ENCODE measurements at regions of chr9 and their contacts with region 1.

Region 1: DNA sequence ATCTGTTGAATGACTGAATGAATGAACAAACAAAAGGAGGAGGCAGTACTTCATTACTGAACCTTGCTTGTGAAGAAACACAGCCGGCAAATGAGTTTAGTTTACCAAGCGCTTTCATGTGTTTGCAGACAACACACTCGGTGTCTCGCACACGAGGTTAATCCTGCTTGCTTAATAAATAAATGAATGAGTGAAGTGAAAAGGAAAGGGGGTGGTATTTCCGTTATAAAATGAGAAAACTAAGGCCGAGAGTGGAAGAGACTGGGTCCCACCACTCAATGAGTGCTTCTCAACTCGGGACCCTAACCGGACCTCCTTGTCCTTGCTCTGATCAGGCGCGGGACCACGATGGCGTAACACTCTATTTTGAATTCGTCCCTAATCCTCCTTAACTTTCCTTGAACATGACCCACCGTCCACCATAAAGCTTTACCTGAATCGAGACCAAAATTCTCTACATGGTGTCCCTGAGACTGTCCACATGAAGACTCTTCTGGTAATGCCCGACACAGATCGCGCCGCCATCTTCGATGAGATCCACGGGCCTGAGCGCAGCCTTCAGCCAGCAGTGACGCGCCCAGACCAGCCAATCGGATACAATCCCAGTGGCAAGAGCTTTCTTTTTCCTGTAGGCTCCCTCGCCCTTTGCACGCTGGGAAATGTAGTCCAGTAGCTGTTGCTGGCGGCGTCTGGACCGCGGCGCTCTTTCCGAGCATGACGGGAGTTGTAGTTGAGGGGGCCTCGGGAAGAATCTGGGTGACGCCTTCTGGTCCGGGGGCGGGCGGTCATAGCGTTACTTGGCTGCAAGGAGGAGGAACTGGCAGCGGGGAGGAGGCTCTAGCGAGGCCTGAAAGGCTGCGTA is at the starts of genes MRPL50 and ZNF189:
- DNase-seq: peak; percentile 98
- H3K4me3 Mint-ChIP-seq: peak within 1 kb of the TSS; percentile 100
- H3K27ac Mint-ChIP-seq: peak within 1 kb of the TSS; percentile 98
- H3K4me1 Mint-ChIP-seq: peaks cover 68% of the 10 kb centered on the region
- H3K27me3 Mint-ChIP-seq: no peaks in the 10 kb centered on the region
- total RNA-seq, gene MRPL50: 13.3 to 13.4 TPM
- total RNA-seq, gene ZNF189: 10.2 to 10.6 TPM

Region 2: DNA sequence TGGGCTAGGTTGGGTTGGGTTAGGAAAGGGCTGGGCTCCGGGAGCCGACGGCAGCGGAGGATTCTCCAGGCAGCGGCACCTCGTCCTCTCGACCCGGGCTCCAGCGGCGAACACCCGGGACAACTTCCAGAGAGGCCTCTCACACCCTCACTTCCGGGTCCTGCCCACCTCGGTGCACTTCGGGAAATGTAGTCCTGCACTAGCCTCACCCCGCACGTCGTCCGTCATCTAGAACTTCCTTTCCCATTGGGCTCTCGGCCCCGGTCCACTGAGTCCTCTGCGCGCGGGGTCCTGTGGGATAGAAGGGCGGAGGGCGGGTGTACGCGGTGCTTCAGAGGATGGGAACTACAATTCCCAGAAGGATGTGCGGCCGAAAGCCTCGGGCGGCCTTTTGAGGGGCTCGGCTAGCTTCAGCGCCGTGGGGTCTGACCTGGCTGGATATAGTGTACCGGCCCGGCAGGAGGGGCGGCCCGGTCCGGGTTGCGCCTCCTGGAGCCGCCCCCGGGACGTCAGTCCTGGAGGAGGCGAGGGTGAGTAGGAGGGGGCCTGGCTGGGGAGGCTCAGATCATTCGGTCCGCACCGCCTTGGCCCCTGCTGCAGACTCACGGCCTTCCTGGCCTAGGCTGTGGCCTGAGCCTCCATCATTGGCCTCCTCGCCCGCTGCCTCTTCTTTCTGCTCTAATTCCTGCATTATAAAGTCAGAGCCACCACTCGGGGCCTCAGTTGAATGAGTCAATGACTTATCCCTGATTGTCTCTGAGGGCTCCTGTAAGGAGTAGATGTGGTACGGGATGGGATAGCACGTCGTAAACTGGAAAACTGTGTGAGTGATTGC is 1299.2 kb before region 1 on chr9 and contains the starts of genes ERP44 and INVS:
- CTCF ChIA-PET with region 1: no interaction called
- POLR2A ChIA-PET with region 1: no interaction called
- intact Hi-C with region 1: loop called (anchors 5 kb)
- DNase-seq: peak; percentile 98
- H3K4me3 Mint-ChIP-seq: peak within 1 kb of the TSS; percentile 98
- H3K27ac Mint-ChIP-seq: peak within 1 kb of the TSS; percentile 83
- H3K4me1 Mint-ChIP-seq: peaks cover 32% of the 10 kb centered on the region
- H3K27me3 Mint-ChIP-seq: no peaks in the 10 kb centered on the region
- total RNA-seq, gene ERP44: 14.5 to 14.8 TPM
- total RNA-seq, gene INVS: 10.5 to 12.1 TPM

Region 3: GRCh38 chr9:100426530-100427428 is 971.5 kb before region 1 on chr9 and contains the start of gene MSANTD3:
- CTCF ChIA-PET with region 1: no interaction called
- POLR2A ChIA-PET with region 1: no interaction called
- intact Hi-C with region 1: loop called (anchors 10 kb)
- DNase-seq: peak; percentile 67
- H3K4me3 Mint-ChIP-seq: peak within 1 kb of the TSS; percentile 79
- H3K27ac Mint-ChIP-seq: peak within 1 kb of the TSS; percentile 82
- H3K4me1 Mint-ChIP-seq: peaks cover 40% of the 10 kb centered on the region
- H3K27me3 Mint-ChIP-seq: peaks cover 1% of the 10 kb centered on the region
- total RNA-seq, gene MSANTD3: 16.3 to 18.3 TPM

Region 4: GRCh38 chr9:101514071-101514470 is 115.8 kb after region 1 on chr9:
- CTCF ChIA-PET with region 1: no interaction called
- POLR2A ChIA-PET with region 1: no interaction called
- intact Hi-C with region 1: loop called (anchors 5 kb)
- DNase-seq: no peak
- H3K4me3 Mint-ChIP-seq: no peak overlapping the region
- H3K27ac Mint-ChIP-seq: no peak overlapping the region
- H3K4me1 Mint-ChIP-seq: peaks cover 21% of the 10 kb centered on the region
- H3K27me3 Mint-ChIP-seq: peaks cover 8% of the 10 kb centered on the region

Region 5: DNA sequence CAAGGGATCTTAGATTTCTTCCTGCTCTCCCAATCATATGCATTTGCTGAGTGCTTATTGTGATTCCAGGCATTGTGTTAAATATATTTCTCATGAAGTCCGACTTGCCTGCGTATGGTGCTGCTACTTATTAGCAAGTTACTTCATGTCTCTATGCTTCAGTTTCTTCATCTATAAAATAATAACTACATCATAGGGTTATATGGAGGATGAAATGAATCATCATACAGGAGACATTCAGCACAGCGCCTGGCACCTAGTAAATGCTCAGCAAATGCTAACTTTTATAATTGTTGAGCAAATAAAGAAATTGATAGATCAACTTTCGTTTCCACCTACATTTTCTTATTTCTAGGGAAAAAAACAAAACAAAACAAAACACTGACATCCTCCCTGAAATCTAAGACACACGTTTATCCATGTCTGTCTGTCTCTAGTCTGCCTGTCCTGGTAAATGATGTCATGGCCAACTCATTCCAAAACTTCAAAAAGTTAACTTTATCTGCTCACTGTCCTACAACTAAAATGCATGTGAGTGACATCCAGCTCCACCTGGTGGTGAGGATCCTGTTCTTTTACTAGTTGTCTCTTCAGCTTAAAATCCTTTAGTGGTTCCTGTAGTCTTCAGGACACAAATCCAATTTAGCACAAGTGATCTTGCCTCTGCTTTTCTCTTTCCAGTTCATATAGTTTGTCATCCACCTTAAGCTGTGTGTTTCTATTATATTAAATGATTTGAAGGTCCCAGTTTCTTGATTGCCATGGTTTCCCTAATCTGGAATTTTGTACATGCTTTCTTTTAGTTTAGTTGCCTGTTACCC is 168.8 kb after region 1 on chr9:
- CTCF ChIA-PET with region 1: no interaction called
- POLR2A ChIA-PET with region 1: no interaction called
- intact Hi-C with region 1: loop called (anchors 1 kb)
- DNase-seq: peak; percentile 58
- H3K4me3 Mint-ChIP-seq: no peak overlapping the region
- H3K27ac Mint-ChIP-seq: no peak overlapping the region
- H3K4me1 Mint-ChIP-seq: peaks cover 52% of the 10 kb centered on the region
- H3K27me3 Mint-ChIP-seq: no peaks in the 10 kb centered on the region

Measured in activated CD4-positive, alpha-beta memory T cell treated with anti-CD3 and anti-CD28 coated beads for 36 hours (primary cell).